Mammary epithelial cell (primary cell): ENCODE measurements at regions of chr3 and their contacts with region 1.

Region 1: DNA sequence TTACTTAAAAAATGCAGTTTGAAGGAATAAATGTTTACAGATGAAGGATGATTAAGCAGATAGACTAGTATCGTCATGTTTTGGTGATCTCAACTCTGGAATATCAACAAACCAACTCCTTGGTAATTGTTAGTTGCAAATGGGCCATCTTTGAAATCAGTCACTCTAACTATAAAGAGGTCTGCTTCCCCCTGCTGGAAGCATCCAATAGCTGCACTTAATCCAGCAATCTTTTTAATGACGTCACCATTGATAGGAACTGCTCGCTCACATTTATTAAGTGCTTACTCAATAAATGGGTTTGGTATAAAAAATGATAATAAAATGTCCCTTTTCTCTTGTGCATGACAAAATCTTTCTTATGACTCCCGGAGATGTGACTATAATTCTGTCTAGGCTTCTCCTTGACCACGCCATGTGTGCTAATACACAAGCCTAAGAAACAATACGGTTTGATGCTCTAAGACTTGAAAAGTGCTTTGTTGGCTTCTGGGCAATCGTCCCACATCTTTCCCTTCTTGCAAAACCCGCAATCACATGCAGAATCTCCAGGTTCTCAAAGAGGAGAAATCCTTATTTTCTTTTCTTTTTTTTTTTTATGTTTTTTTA is 227.6 kb upstream of the POU1F1 start:
- DNase-seq: peak; percentile 70
- H3K4me3 ChIP-seq: no peak overlapping the region
- H3K27ac ChIP-seq: no peak overlapping the region
- H3K4me1 ChIP-seq: no peaks in the 10 kb centered on the region
- H3K27me3 ChIP-seq: no peaks in the 10 kb centered on the region
- CTCF ChIP-seq: peak; percentile 81 to 90

Region 2: DNA sequence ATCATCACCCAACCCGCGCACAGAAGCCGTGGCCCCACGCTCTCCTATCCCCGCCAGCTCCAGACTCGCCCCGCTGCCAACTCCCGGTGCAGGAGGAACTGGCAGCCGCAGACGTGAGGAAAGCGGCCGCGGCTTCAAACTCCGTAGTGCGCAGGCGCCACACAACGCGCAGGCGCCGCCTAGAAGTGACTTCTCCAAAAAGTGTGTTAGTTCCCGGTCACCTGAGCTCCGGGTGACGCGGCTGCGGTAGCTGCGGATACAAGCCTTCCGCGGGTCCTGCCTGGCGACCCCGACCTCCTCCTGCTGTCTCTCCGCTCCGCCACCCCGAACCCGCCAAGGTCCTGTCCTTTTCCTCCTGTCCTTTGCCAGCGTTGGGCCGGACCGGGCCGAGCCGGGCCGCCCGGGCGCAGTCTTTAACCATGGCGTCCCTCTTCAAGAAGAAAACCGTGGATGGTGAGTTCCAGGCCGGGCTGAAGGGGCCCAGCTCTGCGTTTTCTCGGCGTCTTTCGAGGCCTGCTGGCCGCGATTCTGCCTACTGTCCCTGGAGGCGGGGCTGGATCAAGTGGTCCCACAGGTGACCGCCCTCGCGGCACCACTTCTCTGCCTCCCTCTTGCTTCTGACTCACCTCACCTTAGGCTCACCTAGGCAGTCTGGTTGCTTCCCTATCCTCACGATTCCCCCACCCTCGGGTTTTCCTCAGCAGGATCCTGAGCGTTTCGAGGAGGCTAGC is 276.7 kb before region 1 on chr3 and contains the start of gene CHMP2B:
- CTCF ChIA-PET with region 1: no interaction called
- dilution Hi-C with region 1: no loop called
- in situ Hi-C with region 1: no loop called
- intact Hi-C with region 1: no loop called
- DNase-seq: peak; percentile 93
- H3K4me3 ChIP-seq: peak within 1 kb of the TSS; percentile 76 to 81 (median 78)
- H3K27ac ChIP-seq: peak within 1 kb of the TSS; percentile 93
- H3K4me1 ChIP-seq: peaks cover 4% of the 10 kb centered on the region
- H3K27me3 ChIP-seq: no peaks in the 10 kb centered on the region
- CTCF ChIP-seq: no peak
- total RNA-seq, gene CHMP2B: 40.3 to 52.9 TPM

Region 3: DNA sequence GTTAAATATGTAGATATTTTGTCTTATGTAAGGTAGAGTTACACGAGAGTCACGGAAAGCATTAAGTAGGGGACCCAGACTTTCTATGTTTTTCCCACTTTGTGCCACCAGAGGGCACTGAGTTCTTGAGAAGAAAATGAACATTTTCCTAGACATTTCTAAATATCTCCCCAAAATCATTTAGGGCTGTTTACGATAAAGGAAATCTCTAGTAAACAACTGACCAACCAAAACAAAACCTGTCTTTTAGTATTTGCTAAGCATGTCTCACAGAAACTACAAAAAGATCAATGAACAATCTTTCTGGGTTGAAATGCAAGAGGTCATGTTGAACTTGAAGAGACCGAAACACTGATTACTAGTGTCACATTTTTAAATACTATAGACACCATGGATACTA is 243.7 kb before region 1 on chr3:
- CTCF ChIA-PET with region 1: no interaction called
- dilution Hi-C with region 1: no loop called
- in situ Hi-C with region 1: no loop called
- intact Hi-C with region 1: loop called (anchors 1 kb)
- DNase-seq: peak; percentile 24
- H3K4me3 ChIP-seq: no peak overlapping the region
- H3K27ac ChIP-seq: no peak overlapping the region
- H3K4me1 ChIP-seq: no peaks in the 10 kb centered on the region
- H3K27me3 ChIP-seq: no peaks in the 10 kb centered on the region
- CTCF ChIP-seq: peak; percentile 64 to 76

Region 4: DNA sequence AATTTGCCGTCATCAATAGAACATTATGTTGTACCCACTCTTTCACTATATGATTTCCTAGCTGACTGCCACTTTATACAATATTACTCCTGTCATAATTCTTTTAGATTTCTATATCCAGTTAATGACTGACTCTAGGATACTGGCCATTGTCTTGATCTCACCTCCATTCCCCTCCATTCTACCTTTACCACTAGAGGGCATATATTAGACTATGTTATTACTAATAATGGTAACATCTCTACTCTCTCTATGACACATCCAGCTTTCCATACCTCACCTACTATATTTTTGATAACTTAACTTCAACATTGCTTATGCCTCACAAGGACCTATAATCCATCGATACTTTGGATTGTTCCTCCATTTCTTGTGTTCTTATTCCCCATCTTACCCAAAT is 196.2 kb before region 1 on chr3:
- CTCF ChIA-PET with region 1: no interaction called
- dilution Hi-C with region 1: no loop called
- in situ Hi-C with region 1: loop called (anchors 5 to 10 kb)
- intact Hi-C with region 1: loop called (anchors 1 kb)
- DNase-seq: peak; percentile 22
- H3K4me3 ChIP-seq: no peak overlapping the region
- H3K27ac ChIP-seq: no peak overlapping the region
- H3K4me1 ChIP-seq: peaks cover 16% of the 10 kb centered on the region
- H3K27me3 ChIP-seq: no peaks in the 10 kb centered on the region
- CTCF ChIP-seq: peak; percentile 40 to 44

Region 5: DNA sequence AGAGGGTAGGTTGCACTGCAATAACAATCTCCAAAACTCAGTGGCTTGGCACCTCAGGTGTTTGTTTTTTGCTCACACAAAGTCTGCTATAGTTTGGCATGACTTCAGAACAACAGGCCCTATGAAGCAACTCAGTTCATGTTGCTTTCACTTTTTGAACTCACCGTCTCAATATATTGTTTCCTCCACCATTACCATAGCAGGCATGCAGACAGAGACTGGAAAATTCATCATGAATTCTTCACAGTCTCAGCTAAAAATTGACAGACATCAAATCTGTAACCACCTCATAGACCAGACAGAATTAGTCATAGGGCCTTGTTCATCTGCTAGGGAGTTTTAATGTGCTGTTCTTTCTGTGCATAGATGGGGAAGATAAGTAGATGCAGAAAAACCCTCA is 66.2 kb before region 1 on chr3:
- CTCF ChIA-PET with region 1: no interaction called
- dilution Hi-C with region 1: no loop called
- in situ Hi-C with region 1: no loop called
- intact Hi-C with region 1: loop called (anchors 10 kb)
- DNase-seq: peak; percentile 58
- H3K4me3 ChIP-seq: no peak overlapping the region
- H3K27ac ChIP-seq: no peak overlapping the region
- H3K4me1 ChIP-seq: peaks cover 16% of the 10 kb centered on the region
- H3K27me3 ChIP-seq: no peaks in the 10 kb centered on the region
- CTCF ChIP-seq: no peak

Region 6: DNA sequence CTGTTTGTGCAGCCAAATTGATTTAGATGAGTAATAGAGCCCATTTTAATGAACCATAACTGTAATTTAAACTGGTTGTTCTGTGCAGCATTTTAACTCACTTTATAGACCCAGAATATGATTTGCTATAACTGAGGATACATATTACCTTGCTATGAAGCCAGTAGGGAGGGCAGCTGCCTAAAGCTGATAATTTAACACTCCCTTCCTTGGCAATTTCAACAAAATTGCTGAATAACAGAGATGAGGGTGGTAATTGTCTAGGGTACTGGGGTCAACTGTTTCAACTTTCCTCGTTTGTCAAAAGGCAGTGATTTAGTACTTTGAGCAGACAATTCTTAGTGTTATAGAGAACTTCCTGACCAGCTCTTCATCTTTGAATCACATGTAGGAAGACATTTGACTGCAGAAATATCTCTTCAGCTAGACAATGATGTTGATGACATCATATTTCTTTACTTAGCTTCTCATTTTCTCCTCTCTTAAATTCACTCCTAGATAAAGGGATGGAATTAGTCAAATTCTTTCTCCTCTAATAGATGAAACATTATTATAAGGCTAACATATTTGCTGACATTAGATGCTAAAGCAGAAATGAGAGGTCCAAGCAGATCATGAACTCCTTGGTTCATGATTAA is 77.4 kb after region 1 on chr3:
- CTCF ChIA-PET with region 1: no interaction called
- dilution Hi-C with region 1: no loop called
- in situ Hi-C with region 1: no loop called
- intact Hi-C with region 1: no loop called
- DNase-seq: no peak
- H3K4me3 ChIP-seq: no peak overlapping the region
- H3K27ac ChIP-seq: no peak overlapping the region
- H3K4me1 ChIP-seq: no peaks in the 10 kb centered on the region
- H3K27me3 ChIP-seq: no peaks in the 10 kb centered on the region
- CTCF ChIP-seq: no peak

Region 7: GRCh38 chr3:87719060-87719459 is 215.1 kb after region 1 on chr3:
- CTCF ChIA-PET with region 1: no interaction called
- dilution Hi-C with region 1: no loop called
- in situ Hi-C with region 1: no loop called
- intact Hi-C with region 1: no loop called
- DNase-seq: no peak
- H3K4me3 ChIP-seq: no peak overlapping the region
- H3K27ac ChIP-seq: no peak overlapping the region
- H3K4me1 ChIP-seq: no peaks in the 10 kb centered on the region
- H3K27me3 ChIP-seq: peaks cover 3% of the 10 kb centered on the region
- CTCF ChIP-seq: no peak

Region 8: GRCh38 chr3:88180398-88180999 is 676.5 kb after region 1 on chr3:
- CTCF ChIA-PET with region 1: no interaction called
- dilution Hi-C with region 1: no loop called
- in situ Hi-C with region 1: no loop called
- intact Hi-C with region 1: loop called (anchors 10 kb)
- DNase-seq: peak; percentile 37
- H3K4me3 ChIP-seq: no peak overlapping the region
- H3K27ac ChIP-seq: no peak overlapping the region
- H3K4me1 ChIP-seq: no peaks in the 10 kb centered on the region
- H3K27me3 ChIP-seq: no peaks in the 10 kb centered on the region
- CTCF ChIP-seq: peak; percentile 20 to 52